Aorta (tissue), 5 donors: ENCODE measurements at regions of chr14 and their contacts with region 1.

Region 1: GRCh38 chr14:76784266-76785264 is 23.3 kb downstream of the VASH1 start:
- DNase-seq: peak; percentile 86 to 91
- ATAC-seq: peak; percentile 92
- H3K4me3 ChIP-seq: no peak overlapping the region
- H3K27ac ChIP-seq: peak overlapping the region in 1 of 2 donors; percentile 44
- H3K4me1 ChIP-seq: peaks cover 0 to 3% of the 10 kb centered on the region in 2 donors
- H3K27me3 ChIP-seq: no peaks in the 10 kb centered on the region

Region 2: DNA sequence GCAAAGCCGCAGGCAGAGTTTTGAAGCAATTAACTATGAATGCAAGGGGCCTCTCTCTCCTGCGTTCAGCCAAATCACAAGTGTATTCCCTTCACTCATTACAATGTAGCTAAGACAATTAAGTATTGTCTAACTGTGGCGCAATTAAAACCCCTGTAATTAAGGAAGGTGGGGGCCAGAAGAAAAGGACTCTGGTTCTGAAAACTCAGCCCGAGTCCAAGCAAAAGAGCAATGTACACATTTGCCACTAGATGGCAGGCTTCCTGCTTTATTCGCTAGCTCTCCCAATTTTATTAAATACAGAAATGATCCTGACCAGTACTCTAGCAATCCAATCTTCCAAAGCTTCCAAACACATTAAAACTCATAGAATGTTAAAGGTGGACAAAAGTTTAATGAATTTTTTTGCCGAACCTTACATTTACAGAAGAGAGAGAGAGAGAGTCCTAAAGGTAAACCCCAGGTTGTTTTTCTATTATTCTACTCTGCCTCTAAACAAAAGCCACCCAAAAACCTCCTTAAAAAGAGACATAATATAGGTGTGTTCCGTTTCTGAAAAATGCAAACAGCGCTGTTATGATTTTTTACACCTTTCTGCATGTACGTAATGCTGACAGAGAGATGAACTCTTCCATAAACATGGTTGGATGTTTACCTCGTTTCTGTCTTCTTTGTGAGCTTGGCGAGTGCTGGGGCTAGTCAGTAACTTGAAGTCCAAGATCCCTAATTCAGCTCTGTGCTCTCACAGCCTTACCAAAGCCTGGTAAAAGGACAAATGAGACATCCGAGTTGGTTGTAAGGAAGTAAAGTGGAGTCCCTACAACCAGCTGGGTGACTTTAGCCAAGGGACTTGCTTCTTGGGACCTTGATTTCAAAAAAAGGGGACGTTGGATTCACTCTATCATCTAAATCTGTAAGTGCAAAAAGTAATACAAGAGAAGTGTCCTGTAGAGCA is 74.2 kb before region 1 on chr14:
- intact Hi-C with region 1: loop called (anchors 1 to 2 kb)
- DNase-seq: no peak
- ATAC-seq: peak; percentile 77
- H3K4me3 ChIP-seq: no peak overlapping the region
- H3K27ac ChIP-seq: no peak overlapping the region
- H3K4me1 ChIP-seq: no peaks in the 10 kb centered on the region
- H3K27me3 ChIP-seq: no peaks in the 10 kb centered on the region

Region 3: GRCh38 chr14:77067632-77068514 is 283.3 kb after region 1 on chr14:
- intact Hi-C with region 1: no loop called
- DNase-seq: peak; percentile 78 to 90
- ATAC-seq: peak; percentile 80
- H3K4me3 ChIP-seq: no peak overlapping the region
- H3K27ac ChIP-seq: no peak overlapping the region
- H3K4me1 ChIP-seq: no peaks in the 10 kb centered on the region
- H3K27me3 ChIP-seq: no peaks in the 10 kb centered on the region